Activated CD4-positive, alpha-beta T cell treated with anti-CD3 and anti-CD28 coated beads for 36 hours (primary cell): ENCODE measurements at regions of chr17 and their contacts with region 1.

Region 1: DNA sequence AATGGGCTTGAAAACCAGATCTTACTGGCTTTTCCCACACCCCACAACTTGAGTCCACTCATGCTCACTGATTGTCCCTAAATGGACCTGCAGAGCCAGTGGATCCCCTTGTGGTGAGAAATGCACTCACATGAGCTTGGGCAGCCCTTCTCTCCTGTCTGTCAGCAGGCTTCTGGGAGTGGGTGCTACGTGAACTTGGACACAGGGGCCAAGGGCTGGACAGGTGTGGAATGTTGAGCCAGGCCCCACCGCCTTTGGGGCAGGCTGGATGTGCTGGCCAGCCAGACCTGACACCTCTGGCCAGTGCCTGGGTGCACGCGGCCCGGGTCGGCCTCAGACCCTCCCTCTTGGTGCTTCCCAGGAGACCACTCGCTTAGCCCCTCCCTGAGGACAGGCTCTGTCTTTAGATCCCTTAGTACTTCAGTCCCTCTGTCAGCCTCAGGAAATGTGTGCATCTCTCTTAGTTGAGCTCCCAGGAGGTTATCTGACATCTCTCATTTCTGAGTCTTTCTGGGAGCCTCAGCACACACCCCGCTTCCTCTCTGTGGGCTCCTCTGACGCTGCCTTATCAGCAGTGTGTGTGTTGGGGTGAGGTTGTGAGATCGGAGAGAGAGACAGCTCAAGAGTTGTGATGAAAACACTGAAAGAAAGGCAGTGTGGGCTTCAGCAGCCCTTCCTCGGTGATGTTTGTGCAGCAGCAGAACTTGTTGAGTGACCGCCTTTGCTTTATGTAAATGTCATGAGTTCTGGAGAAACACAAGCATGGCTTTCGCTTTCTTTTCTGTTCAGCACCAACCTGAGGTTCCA is 117.0 kb downstream of the RAB11FIP4 start:
- DNase-seq: peak; percentile 79
- ATAC-seq: peak; percentile 85
- H3K4me3 Mint-ChIP-seq: peak overlapping the region; percentile 84
- H3K27ac Mint-ChIP-seq: peak overlapping the region; percentile 100
- H3K4me1 Mint-ChIP-seq: peaks cover 52% of the 10 kb centered on the region
- H3K27me3 Mint-ChIP-seq: no peaks in the 10 kb centered on the region

Region 2: GRCh38 chr17:31156326-31156725 is 352.2 kb before region 1 on chr17:
- CTCF ChIA-PET with region 1: no interaction called
- POLR2A ChIA-PET with region 1: no interaction called
- intact Hi-C with region 1: no loop called
- DNase-seq: no peak
- ATAC-seq: no peak
- H3K4me3 Mint-ChIP-seq: no peak overlapping the region
- H3K27ac Mint-ChIP-seq: no peak overlapping the region
- H3K4me1 Mint-ChIP-seq: peaks cover 8% of the 10 kb centered on the region
- H3K27me3 Mint-ChIP-seq: no peaks in the 10 kb centered on the region

Region 3: GRCh38 chr17:31313982-31314784 is 194.3 kb before region 1 on chr17 and contains the start of gene EVI2B:
- CTCF ChIA-PET with region 1: no interaction called
- POLR2A ChIA-PET with region 1: interaction called, 3 read pairs
- intact Hi-C with region 1: loop called in 1 of 2 experiments (anchors 5 kb)
- DNase-seq: peak; percentile 30
- ATAC-seq: peak; percentile 43
- H3K4me3 Mint-ChIP-seq: peak within 1 kb of the TSS; percentile 79
- H3K27ac Mint-ChIP-seq: peak within 1 kb of the TSS; percentile 93
- H3K4me1 Mint-ChIP-seq: peaks cover 48% of the 10 kb centered on the region
- H3K27me3 Mint-ChIP-seq: no peaks in the 10 kb centered on the region
- total RNA-seq, gene EVI2B: 10.3 to 14.8 TPM

Region 4: GRCh38 chr17:31404028-31404954 is 104.2 kb before region 1 on chr17:
- CTCF ChIA-PET with region 1: no interaction called
- POLR2A ChIA-PET with region 1: no interaction called
- intact Hi-C with region 1: no loop called
- DNase-seq: no peak
- ATAC-seq: peak; percentile 19
- H3K4me3 Mint-ChIP-seq: no peak overlapping the region
- H3K27ac Mint-ChIP-seq: no peak overlapping the region
- H3K4me1 Mint-ChIP-seq: no peaks in the 10 kb centered on the region
- H3K27me3 Mint-ChIP-seq: no peaks in the 10 kb centered on the region

Region 5: DNA sequence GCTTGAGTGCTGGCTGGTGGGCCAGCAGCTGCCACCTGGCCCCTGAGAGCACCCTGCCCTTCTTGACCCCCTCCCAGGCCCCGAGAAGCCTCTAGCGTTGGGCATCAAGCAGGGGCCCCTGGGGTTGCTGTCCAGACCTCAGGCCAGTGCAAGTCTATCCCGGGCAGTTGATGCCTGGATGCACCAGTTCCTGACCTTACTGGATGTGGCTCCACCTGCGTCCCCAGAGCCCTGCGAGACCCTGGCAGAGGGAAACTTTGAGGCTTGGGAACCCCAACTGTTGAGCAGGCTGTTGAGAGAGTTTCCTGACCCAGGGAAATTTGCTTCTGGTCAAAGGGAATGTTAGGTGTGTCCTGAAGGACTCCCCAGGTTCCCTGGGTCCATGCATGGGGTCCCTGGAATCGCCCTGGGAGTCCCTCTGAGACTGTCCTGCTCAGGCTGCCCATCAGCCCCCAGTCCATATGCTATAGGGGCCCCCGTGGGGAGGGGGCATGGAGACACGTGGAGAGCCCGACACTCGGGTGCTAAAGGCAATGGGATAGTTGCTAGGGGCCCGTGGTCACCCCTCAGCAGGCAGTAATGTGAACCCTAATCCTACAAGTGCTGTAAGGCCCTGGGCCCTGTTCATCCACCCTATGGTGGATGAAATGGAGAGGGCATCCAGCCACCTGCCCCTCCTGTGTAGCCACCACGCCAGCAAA is 70.6 kb before region 1 on chr17:
- CTCF ChIA-PET with region 1: interaction called, 14 read pairs
- POLR2A ChIA-PET with region 1: no interaction called
- intact Hi-C with region 1: loop called in 1 of 2 experiments (anchors 1 kb)
- DNase-seq: no peak
- ATAC-seq: no peak
- H3K4me3 Mint-ChIP-seq: no peak overlapping the region
- H3K27ac Mint-ChIP-seq: no peak overlapping the region
- H3K4me1 Mint-ChIP-seq: peaks cover 11% of the 10 kb centered on the region
- H3K27me3 Mint-ChIP-seq: no peaks in the 10 kb centered on the region

Region 6: GRCh38 chr17:31487648-31488263 is 20.7 kb before region 1 on chr17:
- CTCF ChIA-PET with region 1: interaction called, 64 read pairs
- POLR2A ChIA-PET with region 1: interaction called, 24 read pairs
- intact Hi-C with region 1: loop called (anchors 1 kb)
- DNase-seq: peak; percentile 95
- ATAC-seq: peak; percentile 92
- H3K4me3 Mint-ChIP-seq: peak overlapping the region; percentile 84
- H3K27ac Mint-ChIP-seq: peak overlapping the region; percentile 82
- H3K4me1 Mint-ChIP-seq: peaks cover 48% of the 10 kb centered on the region
- H3K27me3 Mint-ChIP-seq: no peaks in the 10 kb centered on the region

Region 7: DNA sequence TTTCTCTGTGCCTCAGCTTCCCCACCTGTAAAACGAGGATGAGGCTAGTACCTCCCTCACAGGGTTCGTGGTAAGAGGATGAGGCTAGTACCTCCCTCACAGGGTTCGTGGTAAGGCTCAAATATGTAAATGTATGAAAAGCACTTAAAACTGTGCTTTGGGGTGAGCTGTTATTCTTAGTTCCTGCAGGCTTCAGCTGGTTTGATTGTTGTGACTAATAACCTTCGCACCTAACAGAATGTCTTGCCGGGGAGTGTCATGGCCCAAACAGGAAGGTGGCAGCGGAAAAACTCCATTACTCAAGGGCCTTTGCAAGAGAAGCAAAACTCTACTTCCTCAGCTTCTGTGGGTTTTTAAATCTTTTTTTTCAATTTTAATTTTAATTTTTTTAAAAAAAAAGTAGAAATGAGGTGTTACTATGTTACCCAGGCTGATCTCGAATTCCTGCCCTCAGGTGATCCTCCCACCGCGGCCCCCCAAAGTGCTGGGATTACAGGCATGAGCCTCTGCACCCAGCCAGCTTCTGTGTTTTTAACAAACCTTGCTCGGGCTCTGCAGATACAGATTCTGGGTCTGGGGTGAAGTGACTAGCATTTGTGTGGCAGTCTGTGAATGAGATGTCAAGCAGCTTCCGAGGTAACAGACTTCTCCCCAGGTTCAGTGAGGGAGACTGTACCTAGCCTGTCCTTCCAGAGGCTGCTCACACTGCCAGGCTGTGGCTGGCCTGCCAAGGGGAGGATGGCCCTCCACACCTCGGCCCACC is 14.1 kb before region 1 on chr17:
- CTCF ChIA-PET with region 1: interaction called, 64 read pairs
- POLR2A ChIA-PET with region 1: interaction called, 24 read pairs
- intact Hi-C with region 1: loop called (anchors 1 kb)
- DNase-seq: peak; percentile 82
- ATAC-seq: peak; percentile 86
- H3K4me3 Mint-ChIP-seq: peak overlapping the region; percentile 58
- H3K27ac Mint-ChIP-seq: peak overlapping the region; percentile 97
- H3K4me1 Mint-ChIP-seq: peaks cover 91% of the 10 kb centered on the region
- H3K27me3 Mint-ChIP-seq: no peaks in the 10 kb centered on the region

Region 8: DNA sequence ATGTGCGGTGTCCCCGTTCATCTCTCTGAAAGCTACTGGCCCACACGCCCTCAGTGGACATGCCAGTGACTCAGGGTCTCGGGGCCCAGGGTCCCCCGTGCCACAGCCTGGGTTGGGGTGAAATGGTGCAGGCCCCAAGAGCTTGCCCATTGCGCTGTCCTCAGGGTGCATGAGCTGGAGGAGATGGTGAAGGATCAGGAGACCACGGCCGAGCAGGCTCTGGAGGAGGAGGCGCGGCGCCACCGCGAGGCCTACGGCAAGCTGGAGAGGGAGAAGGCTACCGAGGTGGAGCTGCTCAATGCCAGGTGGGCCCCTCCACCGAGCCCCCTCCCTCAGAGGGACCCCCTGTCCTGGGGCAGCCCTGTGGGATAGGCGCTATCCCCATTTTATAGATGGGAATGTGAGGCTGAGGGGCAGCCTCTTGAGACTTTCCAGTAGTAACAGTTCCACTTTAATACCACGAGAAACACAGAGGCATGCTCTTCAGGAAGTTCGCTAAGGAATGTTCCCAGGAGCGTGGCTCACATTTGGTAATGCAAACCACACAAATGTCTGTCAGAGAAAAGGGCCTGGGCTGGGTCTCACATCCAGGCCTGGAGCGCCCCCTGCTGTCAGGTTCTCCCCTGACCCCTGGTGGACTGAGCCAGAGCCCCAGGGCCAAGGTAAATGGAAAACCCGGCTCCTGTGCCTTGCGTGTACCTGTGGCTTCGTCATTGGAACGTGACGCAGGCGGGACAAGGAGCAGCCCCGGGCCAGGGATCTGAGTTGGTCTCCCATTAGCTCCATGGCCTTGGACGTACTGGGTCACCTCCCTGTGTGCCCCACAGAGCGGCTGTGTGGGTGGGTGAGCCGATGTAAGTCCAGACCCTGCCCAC is 16.7 kb after region 1 on chr17:
- CTCF ChIA-PET with region 1: interaction called, 16 read pairs
- POLR2A ChIA-PET with region 1: interaction called, 3 read pairs
- intact Hi-C with region 1: no loop called
- DNase-seq: peak; percentile 93
- ATAC-seq: peak; percentile 88
- H3K4me3 Mint-ChIP-seq: no peak overlapping the region
- H3K27ac Mint-ChIP-seq: no peak overlapping the region
- H3K4me1 Mint-ChIP-seq: no peaks in the 10 kb centered on the region
- H3K27me3 Mint-ChIP-seq: no peaks in the 10 kb centered on the region